ENCODE measurements at regions of chr1 and their contacts with region 1.

Region 1: GRCh38 chr1:231211005-231211857 is 29.8 kb upstream of the GNPAT start:
- DNase-seq: peak; percentile 94
- ATAC-seq: peak; percentile 93
- H3K4me3 ChIP-seq: peak overlapping the region; percentile 21 to 67 (median 37)
- H3K4me3 Mint-ChIP-seq: peak overlapping the region; percentile 88
- H3K27ac ChIP-seq: peak overlapping the region; percentile 59 to 65
- H3K27ac Mint-ChIP-seq: peak overlapping the region; percentile 88
- H3K4me1 ChIP-seq: peaks cover 22 to 29% of the 10 kb centered on the region in 2 donors
- H3K4me1 Mint-ChIP-seq: peaks cover 31% of the 10 kb centered on the region
- H3K27me3 ChIP-seq: no peaks in the 10 kb centered on the region
- H3K27me3 Mint-ChIP-seq: no peaks in the 10 kb centered on the region
- CTCF ChIP-seq: peak; percentile 93

Region 2: GRCh38 chr1:230797942-230798418 is 413.3 kb before region 1 on chr1:
- CTCF ChIA-PET with region 1: no interaction called
- POLR2A ChIA-PET with region 1: no interaction called
- intact Hi-C with region 1: loop called (anchors 5 kb)
- DNase-seq: no peak
- ATAC-seq: no peak
- H3K4me3 ChIP-seq: no peak overlapping the region
- H3K4me3 Mint-ChIP-seq: no peak overlapping the region
- H3K27ac ChIP-seq: no peak overlapping the region
- H3K27ac Mint-ChIP-seq: no peak overlapping the region
- H3K4me1 ChIP-seq: no peaks in the 10 kb centered on the region
- H3K4me1 Mint-ChIP-seq: no peaks in the 10 kb centered on the region
- H3K27me3 ChIP-seq: peaks cover 0 to 17% (median 0%) of the 10 kb centered on the region in 4 experiments
- H3K27me3 Mint-ChIP-seq: peaks cover 37% of the 10 kb centered on the region
- CTCF ChIP-seq: no peak

Region 3: DNA sequence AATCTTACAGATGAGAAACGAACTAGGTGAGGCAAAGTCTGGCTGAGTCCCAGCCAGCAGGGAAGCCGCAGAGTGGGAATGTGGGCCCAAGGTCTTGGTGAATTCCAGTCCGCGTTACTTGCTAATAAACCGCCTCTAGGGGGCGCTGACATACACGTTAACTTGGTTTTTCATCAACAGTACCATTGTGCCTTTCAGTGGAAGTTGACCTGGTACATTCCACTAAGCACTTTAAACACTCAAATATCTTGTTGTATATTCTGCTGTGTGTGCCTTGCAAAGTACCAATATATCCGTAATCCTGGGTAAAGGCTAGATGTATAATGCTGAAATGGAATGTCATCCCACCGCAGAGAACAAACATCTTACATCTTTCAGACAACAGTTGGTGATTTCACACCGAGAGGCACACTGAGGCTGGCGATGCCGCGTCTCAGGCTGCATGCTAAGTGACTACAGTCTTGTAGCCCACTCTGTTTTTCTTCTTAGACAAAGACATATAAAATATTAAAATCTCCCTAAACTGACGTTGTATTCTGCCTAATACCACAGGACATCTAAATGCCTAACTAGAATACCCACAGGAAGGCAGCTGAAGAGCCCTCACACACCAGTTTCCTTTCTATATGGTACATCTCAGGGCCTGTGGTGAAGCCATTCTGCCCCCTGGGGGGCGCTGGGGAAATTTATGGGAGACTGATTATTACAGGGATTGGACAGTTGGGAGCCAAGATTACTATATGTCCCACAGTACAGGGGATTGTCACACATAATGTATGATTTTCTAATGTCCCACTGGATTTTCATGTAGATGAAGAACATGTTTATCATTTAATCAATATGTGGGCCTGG is 293.7 kb before region 1 on chr1:
- CTCF ChIA-PET with region 1: interaction called, 12 read pairs
- POLR2A ChIA-PET with region 1: no interaction called
- intact Hi-C with region 1: no loop called
- DNase-seq: peak; percentile 85
- ATAC-seq: peak; percentile 64
- H3K4me3 ChIP-seq: no peak overlapping the region
- H3K4me3 Mint-ChIP-seq: no peak overlapping the region
- H3K27ac ChIP-seq: peak overlapping the region in 1 of 2 donors; percentile 53
- H3K27ac Mint-ChIP-seq: no peak overlapping the region
- H3K4me1 ChIP-seq: no peaks in the 10 kb centered on the region
- H3K4me1 Mint-ChIP-seq: no peaks in the 10 kb centered on the region
- H3K27me3 ChIP-seq: no peaks in the 10 kb centered on the region
- H3K27me3 Mint-ChIP-seq: no peaks in the 10 kb centered on the region
- CTCF ChIP-seq: peak; percentile 91

Region 4: GRCh38 chr1:231040019-231040799 is 171.0 kb before region 1 on chr1 and contains the start of gene FAM89A:
- CTCF ChIA-PET with region 1: interaction called, 3 read pairs
- POLR2A ChIA-PET with region 1: interaction called, 9 read pairs
- intact Hi-C with region 1: loop called (anchors 5 kb)
- DNase-seq: peak; percentile 84
- ATAC-seq: peak; percentile 82
- H3K4me3 ChIP-seq: peak within 1 kb of the TSS; percentile 6 to 85 (median 68)
- H3K4me3 Mint-ChIP-seq: peak within 1 kb of the TSS; percentile 86
- H3K27ac ChIP-seq: no peak within 1 kb of the TSS
- H3K27ac Mint-ChIP-seq: peak within 1 kb of the TSS; percentile 47
- H3K4me1 ChIP-seq: peaks cover 13% of the 10 kb centered on the region in 2 donors
- H3K4me1 Mint-ChIP-seq: peaks cover 16% of the 10 kb centered on the region
- H3K27me3 ChIP-seq: peaks cover 0 to 11% (median 3%) of the 10 kb centered on the region in 4 experiments
- H3K27me3 Mint-ChIP-seq: peaks cover 6% of the 10 kb centered on the region
- CTCF ChIP-seq: no peak
- total RNA-seq, gene FAM89A: 5.6 and 6.1 TPM in 2 replicates

Region 5: GRCh38 chr1:231232870-231233734 is 21.9 kb after region 1 on chr1:
- CTCF ChIA-PET with region 1: interaction called, 14 read pairs
- POLR2A ChIA-PET with region 1: interaction called, 8 read pairs
- intact Hi-C with region 1: loop called (anchors 2 kb)
- DNase-seq: peak; percentile 63
- ATAC-seq: peak; percentile 85
- H3K4me3 ChIP-seq: peak overlapping the region in 1 of 5 experiments; percentile 11
- H3K4me3 Mint-ChIP-seq: peak overlapping the region; percentile 38
- H3K27ac ChIP-seq: peak overlapping the region in 1 of 2 donors; percentile 40
- H3K27ac Mint-ChIP-seq: peak overlapping the region; percentile 59
- H3K4me1 ChIP-seq: peaks cover 11 to 13% of the 10 kb centered on the region in 2 donors
- H3K4me1 Mint-ChIP-seq: peaks cover 41% of the 10 kb centered on the region
- H3K27me3 ChIP-seq: no peaks in the 10 kb centered on the region
- H3K27me3 Mint-ChIP-seq: no peaks in the 10 kb centered on the region
- CTCF ChIP-seq: no peak

Region 6: GRCh38 chr1:231240883-231241735 is 29.9 kb after region 1 on chr1 and contains the start of gene GNPAT:
- CTCF ChIA-PET with region 1: interaction called, 5 read pairs
- POLR2A ChIA-PET with region 1: interaction called, 5 read pairs
- intact Hi-C with region 1: loop called (anchors 1 kb)
- DNase-seq: peak; percentile 93
- ATAC-seq: peak; percentile 96
- H3K4me3 ChIP-seq: peak within 1 kb of the TSS; percentile 78 to 92 (median 88)
- H3K4me3 Mint-ChIP-seq: peak within 1 kb of the TSS; percentile 96
- H3K27ac ChIP-seq: peak within 1 kb of the TSS; percentile 76 to 87
- H3K27ac Mint-ChIP-seq: peak within 1 kb of the TSS; percentile 95
- H3K4me1 ChIP-seq: peaks cover 23 to 29% of the 10 kb centered on the region in 2 donors
- H3K4me1 Mint-ChIP-seq: peaks cover 68% of the 10 kb centered on the region
- H3K27me3 ChIP-seq: no peaks in the 10 kb centered on the region
- H3K27me3 Mint-ChIP-seq: no peaks in the 10 kb centered on the region
- CTCF ChIP-seq: no peak
- total RNA-seq, gene GNPAT: 48.0 and 49.0 TPM in 2 replicates

Region 7: DNA sequence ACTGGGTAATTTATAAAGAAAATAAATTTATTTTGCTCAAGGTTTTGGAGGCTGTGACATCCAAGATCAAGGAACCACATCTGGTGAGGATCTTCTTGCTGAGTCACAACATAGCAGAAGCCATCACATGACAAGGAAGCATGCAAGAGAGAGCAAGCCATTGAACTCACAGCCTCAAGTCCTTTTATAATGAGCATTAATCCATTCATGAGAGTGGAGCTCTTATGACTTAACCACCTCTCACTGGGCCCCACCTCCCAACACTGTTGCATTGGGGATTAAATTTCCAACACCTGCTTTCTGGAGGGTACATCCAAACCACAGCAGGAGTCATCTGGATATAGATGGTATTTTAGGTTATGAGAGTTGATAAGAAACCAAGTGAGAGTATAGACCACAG is 231.5 kb after region 1 on chr1:
- CTCF ChIA-PET with region 1: no interaction called
- POLR2A ChIA-PET with region 1: no interaction called
- intact Hi-C with region 1: no loop called
- DNase-seq: no peak
- ATAC-seq: no peak
- H3K4me3 ChIP-seq: no peak overlapping the region
- H3K4me3 Mint-ChIP-seq: no peak overlapping the region
- H3K27ac ChIP-seq: no peak overlapping the region
- H3K27ac Mint-ChIP-seq: no peak overlapping the region
- H3K4me1 ChIP-seq: no peaks in the 10 kb centered on the region
- H3K4me1 Mint-ChIP-seq: no peaks in the 10 kb centered on the region
- H3K27me3 ChIP-seq: peaks cover 0 to 22% (median 5%) of the 10 kb centered on the region in 4 experiments
- H3K27me3 Mint-ChIP-seq: peaks cover 36% of the 10 kb centered on the region
- CTCF ChIP-seq: no peak

Region 8: GRCh38 chr1:231465051-231465450 is 253.8 kb after region 1 on chr1:
- CTCF ChIA-PET with region 1: no interaction called
- POLR2A ChIA-PET with region 1: no interaction called
- intact Hi-C with region 1: no loop called
- DNase-seq: no peak
- ATAC-seq: no peak
- H3K4me3 ChIP-seq: no peak overlapping the region
- H3K4me3 Mint-ChIP-seq: no peak overlapping the region
- H3K27ac ChIP-seq: no peak overlapping the region
- H3K27ac Mint-ChIP-seq: no peak overlapping the region
- H3K4me1 ChIP-seq: no peaks in the 10 kb centered on the region
- H3K4me1 Mint-ChIP-seq: no peaks in the 10 kb centered on the region
- H3K27me3 ChIP-seq: peaks cover 0 to 11% (median 5%) of the 10 kb centered on the region in 4 experiments
- H3K27me3 Mint-ChIP-seq: peaks cover 21% of the 10 kb centered on the region
- CTCF ChIP-seq: no peak